Psoas muscle (tissue), 8 donors: ENCODE measurements at regions of chr10 and their contacts with region 1.

Region 1: GRCh38 chr10:74363727-74364126 is 212.7 kb downstream of the ADK start:
- DNase-seq: no peak
- ATAC-seq: no peak
- H3K4me3 ChIP-seq: no peak overlapping the region
- H3K27ac ChIP-seq: no peak overlapping the region
- H3K4me1 ChIP-seq: no peaks in the 10 kb centered on the region
- H3K27me3 ChIP-seq: no peaks in the 10 kb centered on the region
- CTCF ChIP-seq: no peak

Region 2: GRCh38 chr10:74306227-74306982 is 57.3 kb before region 1 on chr10:
- intact Hi-C with region 1: loop called in 1 of 2 experiments (anchors 2 kb)
- DNase-seq: no peak
- ATAC-seq: no peak
- H3K4me3 ChIP-seq: no peak overlapping the region
- H3K27ac ChIP-seq: no peak overlapping the region
- H3K4me1 ChIP-seq: no peaks in the 10 kb centered on the region
- H3K27me3 ChIP-seq: no peaks in the 10 kb centered on the region
- CTCF ChIP-seq: no peak